ENCODE measurements at regions of chr7 and their contacts with region 1.

Region 1: GRCh38 chr7:134432296-134433152 is 26.4 kb downstream of the AKR1B1 start:
- DNase-seq: peak; percentile 99 to 100
- ATAC-seq: peak; percentile 92 to 96
- H3K4me3 ChIP-seq: peak overlapping the region; percentile 46
- H3K27ac ChIP-seq: peak overlapping the region; percentile 79 to 88
- H3K4me1 ChIP-seq: peaks cover 30% of the 10 kb centered on the region
- CTCF ChIP-seq: peak; percentile 100
- EP300 ChIP-seq: no peak
- POLR2A ChIP-seq: no peak; the same call in 1 of the 2 replicates
- RAD21 ChIP-seq: peak; percentile 100

Region 2: GRCh38 chr7:134276951-134277350 is 155.6 kb before region 1 on chr7:
- CTCF ChIA-PET with region 1: no interaction called
- POLR2A ChIA-PET with region 1: no interaction called
- DNase-seq: no peak
- ATAC-seq: peak in 1 of 2 experiments; percentile 30; a peak in 2 of 6 replicates
- H3K4me3 ChIP-seq: no peak overlapping the region
- H3K27ac ChIP-seq: no peak overlapping the region
- H3K4me1 ChIP-seq: peaks cover 7% of the 10 kb centered on the region; the same call in 2 of the 3 replicates
- CTCF ChIP-seq: no peak
- EP300 ChIP-seq: no peak
- POLR2A ChIP-seq: no peak
- RAD21 ChIP-seq: no peak

Region 3: GRCh38 chr7:134355927-134356326 is 76.6 kb before region 1 on chr7:
- CTCF ChIA-PET with region 1: interaction called, 10 read pairs
- POLR2A ChIA-PET with region 1: no interaction called
- DNase-seq: peak in 1 of 2 experiments; percentile 51
- ATAC-seq: peak in 1 of 2 experiments; percentile 24; a peak in 4 of 6 replicates
- H3K4me3 ChIP-seq: no peak overlapping the region
- H3K27ac ChIP-seq: peak overlapping the region; percentile 56 to 60; a peak in 5 of 6 replicates
- H3K4me1 ChIP-seq: peaks cover 23% of the 10 kb centered on the region
- CTCF ChIP-seq: no peak
- EP300 ChIP-seq: no peak; a peak in 1 of 5 replicates
- POLR2A ChIP-seq: no peak
- RAD21 ChIP-seq: no peak

Region 4: GRCh38 chr7:134458806-134459698 is 26.5 kb after region 1 on chr7 and contains the start of gene AKR1B1:
- CTCF ChIA-PET with region 1: interaction called, 258 read pairs
- POLR2A ChIA-PET with region 1: interaction called, 14 read pairs
- DNase-seq: peak; percentile 98 to 99
- ATAC-seq: peak; percentile 93 to 94
- H3K4me3 ChIP-seq: peak within 1 kb of the TSS; percentile 86
- H3K27ac ChIP-seq: peak within 1 kb of the TSS; percentile 93 to 94
- H3K4me1 ChIP-seq: peaks cover 72% of the 10 kb centered on the region
- CTCF ChIP-seq: peak; percentile 56
- EP300 ChIP-seq: no peak
- POLR2A ChIP-seq: peak; percentile 99
- RAD21 ChIP-seq: peak; percentile 10 to 56; a peak in 3 of 5 replicates
- polyA plus RNA-seq, gene AKR1B1: 1,636 and 1,761 TPM in 2 replicates

Region 5: DNA sequence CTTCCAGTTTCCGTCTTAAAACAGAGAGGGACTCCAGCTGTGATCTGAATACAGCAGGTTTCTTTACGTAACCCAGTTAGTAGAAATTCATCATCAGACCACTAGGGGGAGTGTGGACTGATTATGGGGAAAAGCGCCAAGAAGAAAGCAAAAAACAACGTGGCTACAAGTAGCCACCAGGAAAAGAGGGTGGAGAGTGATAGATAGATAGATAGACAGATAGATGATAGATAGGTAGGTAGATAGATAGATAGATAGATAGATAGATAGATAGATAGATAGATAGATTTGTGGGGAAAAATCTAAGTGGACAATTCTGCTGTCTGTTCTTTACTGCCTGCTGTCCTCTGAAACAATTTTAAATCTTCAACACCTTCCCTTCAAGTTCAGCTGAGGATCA is 82.1 kb after region 1 on chr7:
- CTCF ChIA-PET with region 1: interaction called, 566 read pairs
- POLR2A ChIA-PET with region 1: interaction called, 23 read pairs
- DNase-seq: peak; percentile 91 to 92
- ATAC-seq: peak; percentile 63 to 71
- H3K4me3 ChIP-seq: no peak overlapping the region
- H3K27ac ChIP-seq: peak overlapping the region; percentile 68 to 83
- H3K4me1 ChIP-seq: peaks cover 37% of the 10 kb centered on the region
- CTCF ChIP-seq: peak; percentile 97
- EP300 ChIP-seq: no peak
- POLR2A ChIP-seq: no peak
- RAD21 ChIP-seq: peak; percentile 71 to 82

Region 6: GRCh38 chr7:134547397-134548054 is 115.0 kb after region 1 on chr7:
- CTCF ChIA-PET with region 1: interaction called, 54 read pairs
- POLR2A ChIA-PET with region 1: interaction called, 7 read pairs
- DNase-seq: peak; percentile 85 to 97
- ATAC-seq: peak; percentile 54 to 74
- H3K4me3 ChIP-seq: peak overlapping the region; percentile 24
- H3K27ac ChIP-seq: peak overlapping the region; percentile 79 to 86
- H3K4me1 ChIP-seq: peaks cover 64% of the 10 kb centered on the region
- CTCF ChIP-seq: peak; percentile 100
- EP300 ChIP-seq: no peak
- POLR2A ChIP-seq: no peak
- RAD21 ChIP-seq: peak; percentile 84 to 86

Region 7: GRCh38 chr7:134625550-134625949 is 193.0 kb after region 1 on chr7:
- CTCF ChIA-PET with region 1: interaction called, 11 read pairs
- POLR2A ChIA-PET with region 1: no interaction called
- DNase-seq: no peak
- ATAC-seq: no peak
- H3K4me3 ChIP-seq: no peak overlapping the region
- H3K27ac ChIP-seq: no peak overlapping the region
- H3K4me1 ChIP-seq: peaks cover 2% of the 10 kb centered on the region
- CTCF ChIP-seq: no peak
- EP300 ChIP-seq: no peak
- POLR2A ChIP-seq: no peak
- RAD21 ChIP-seq: no peak

Measured in A549 (cell line).